ENCODE measurements at regions of chr6 and their contacts with region 1.

Region 1: GRCh38 chr6:32971581-32972352 is 3.4 kb downstream of the BRD2 start:
- DNase-seq: peak; percentile 100
- H3K4me3 Mint-ChIP-seq: peak overlapping the region; percentile 90
- H3K27ac Mint-ChIP-seq: peak overlapping the region; percentile 99
- H3K4me1 Mint-ChIP-seq: peaks cover 38% of the 10 kb centered on the region
- H3K27me3 Mint-ChIP-seq: no peaks in the 10 kb centered on the region
- CTCF ChIP-seq: no peak

Region 2: GRCh38 chr6:32195652-32195901 is 776.2 kb before region 1 on chr6:
- CTCF ChIA-PET with region 1: no interaction called
- POLR2A ChIA-PET with region 1: interaction called, 16 read pairs
- intact Hi-C with region 1: no loop called
- DNase-seq: peak; percentile 99
- H3K4me3 Mint-ChIP-seq: peak overlapping the region; percentile 93
- H3K27ac Mint-ChIP-seq: peak overlapping the region; percentile 98
- H3K4me1 Mint-ChIP-seq: peaks cover 12% of the 10 kb centered on the region
- H3K27me3 Mint-ChIP-seq: no peaks in the 10 kb centered on the region
- CTCF ChIP-seq: no peak

Region 3: GRCh38 chr6:32614366-32615081 is 357.2 kb before region 1 on chr6:
- CTCF ChIA-PET with region 1: no interaction called
- POLR2A ChIA-PET with region 1: no interaction called
- intact Hi-C with region 1: no loop called
- DNase-seq: no peak
- H3K4me3 Mint-ChIP-seq: no peak overlapping the region
- H3K27ac Mint-ChIP-seq: no peak overlapping the region
- H3K4me1 Mint-ChIP-seq: no peaks in the 10 kb centered on the region
- H3K27me3 Mint-ChIP-seq: peaks cover 52% of the 10 kb centered on the region
- CTCF ChIP-seq: no peak

Region 4: GRCh38 chr6:32853541-32854375 is 118.0 kb before region 1 on chr6 and contains the starts of genes PSMB9 and TAP1:
- CTCF ChIA-PET with region 1: interaction called, 6 read pairs
- POLR2A ChIA-PET with region 1: interaction called, 23 read pairs
- intact Hi-C with region 1: no loop called
- DNase-seq: peak; percentile 94
- H3K4me3 Mint-ChIP-seq: peak within 1 kb of the TSS; percentile 99
- H3K27ac Mint-ChIP-seq: peak within 1 kb of the TSS; percentile 94
- H3K4me1 Mint-ChIP-seq: peaks cover 21% of the 10 kb centered on the region
- H3K27me3 Mint-ChIP-seq: no peaks in the 10 kb centered on the region
- CTCF ChIP-seq: peak; percentile 51
- total RNA-seq, gene PSMB9: 3.5 and 4.4 TPM in 2 replicates
- total RNA-seq, gene TAP1: 32.3 and 35.2 TPM in 2 replicates

Region 5: DNA sequence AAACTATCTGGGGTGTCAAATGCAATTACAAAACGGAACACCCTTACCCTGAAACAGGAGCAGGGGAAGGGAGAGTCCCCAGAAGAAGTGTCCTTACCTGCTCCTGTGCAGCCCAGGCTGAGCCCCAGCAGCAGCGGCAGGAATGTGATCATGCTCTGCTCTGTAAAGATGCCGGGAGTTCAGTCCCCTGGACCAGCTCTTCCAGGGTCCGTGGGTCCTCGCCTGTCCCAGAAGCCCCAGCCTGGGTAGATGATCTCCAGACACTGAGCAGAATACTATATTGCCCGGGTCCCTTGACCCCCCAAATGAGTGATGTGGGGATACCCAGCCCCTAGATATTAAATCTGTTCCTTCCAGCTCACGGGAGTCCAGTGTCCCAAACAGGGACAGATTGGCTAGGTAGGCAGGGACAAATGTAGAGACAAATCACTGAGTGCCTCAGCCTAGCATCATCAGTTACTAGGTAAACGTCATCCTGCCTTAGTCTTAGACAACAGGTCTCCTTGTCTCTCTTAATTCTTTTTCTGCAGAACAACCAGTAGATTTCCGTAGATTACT is 31.0 kb before region 1 on chr6 and contains the start of gene HLA-DMB:
- CTCF ChIA-PET with region 1: interaction called, 4 read pairs
- POLR2A ChIA-PET with region 1: interaction called, 21 read pairs
- intact Hi-C with region 1: no loop called
- DNase-seq: peak; percentile 75
- H3K4me3 Mint-ChIP-seq: no peak within 1 kb of the TSS
- H3K27ac Mint-ChIP-seq: no peak within 1 kb of the TSS
- H3K4me1 Mint-ChIP-seq: peaks cover 5% of the 10 kb centered on the region
- H3K27me3 Mint-ChIP-seq: peaks cover 74% of the 10 kb centered on the region
- CTCF ChIP-seq: no peak
- total RNA-seq, gene HLA-DMB: not detected in 2 replicates

Region 6: DNA sequence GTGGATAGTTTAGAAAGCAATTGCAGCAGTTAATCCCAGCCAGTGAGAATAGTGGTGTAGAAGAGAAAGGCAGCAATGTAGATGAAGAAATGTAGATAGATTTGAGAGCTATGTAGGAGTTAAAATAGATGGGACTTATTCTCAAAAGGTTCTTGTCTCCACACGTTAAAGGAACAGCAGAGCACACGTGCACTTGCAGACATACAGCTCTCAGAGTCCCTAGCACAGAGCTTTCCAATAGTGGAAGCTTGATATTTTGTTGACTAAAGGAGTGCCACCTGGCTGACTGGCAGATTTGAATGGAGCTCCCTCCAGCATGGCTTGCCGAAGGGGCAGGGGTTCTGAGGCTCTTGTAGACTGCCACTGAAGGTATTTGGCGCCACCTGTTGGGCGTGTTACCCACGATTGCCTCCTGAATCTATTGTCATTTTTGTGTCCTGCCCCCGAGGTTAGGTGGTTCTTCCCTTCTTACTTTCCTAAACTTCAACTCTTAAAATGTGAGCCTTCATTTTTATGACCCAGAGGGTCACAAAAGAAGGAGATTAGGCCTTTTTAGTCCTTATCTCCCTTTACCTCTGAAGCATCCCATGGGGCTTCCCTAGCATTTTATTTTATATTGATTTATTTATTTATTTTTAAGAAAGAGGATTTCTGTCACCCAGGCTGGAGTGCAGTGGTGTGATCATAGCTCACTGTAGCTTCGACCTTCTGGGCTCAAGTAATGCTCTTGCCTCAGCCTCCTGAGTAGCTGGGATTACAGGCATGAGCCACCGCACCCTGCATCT is 13.0 kb after region 1 on chr6:
- CTCF ChIA-PET with region 1: interaction called, 59 read pairs
- POLR2A ChIA-PET with region 1: interaction called, 245 read pairs
- intact Hi-C with region 1: loop called (anchors 1 kb)
- DNase-seq: peak; percentile 91
- H3K4me3 Mint-ChIP-seq: no peak overlapping the region
- H3K27ac Mint-ChIP-seq: no peak overlapping the region
- H3K4me1 Mint-ChIP-seq: peaks cover 20% of the 10 kb centered on the region
- H3K27me3 Mint-ChIP-seq: no peaks in the 10 kb centered on the region
- CTCF ChIP-seq: peak; percentile 81

Region 7: GRCh38 chr6:33276864-33277662 is 305.3 kb after region 1 on chr6 and contains the start of gene B3GALT4:
- CTCF ChIA-PET with region 1: no interaction called
- POLR2A ChIA-PET with region 1: interaction called, 67 read pairs
- intact Hi-C with region 1: no loop called
- DNase-seq: peak; percentile 72
- H3K4me3 Mint-ChIP-seq: peak within 1 kb of the TSS; percentile 99
- H3K27ac Mint-ChIP-seq: peak within 1 kb of the TSS; percentile 80
- H3K4me1 Mint-ChIP-seq: peaks cover 30% of the 10 kb centered on the region
- H3K27me3 Mint-ChIP-seq: no peaks in the 10 kb centered on the region
- CTCF ChIP-seq: peak; percentile 52
- total RNA-seq, gene B3GALT4: 0.37 and 0.58 TPM in 2 replicates

Region 8: DNA sequence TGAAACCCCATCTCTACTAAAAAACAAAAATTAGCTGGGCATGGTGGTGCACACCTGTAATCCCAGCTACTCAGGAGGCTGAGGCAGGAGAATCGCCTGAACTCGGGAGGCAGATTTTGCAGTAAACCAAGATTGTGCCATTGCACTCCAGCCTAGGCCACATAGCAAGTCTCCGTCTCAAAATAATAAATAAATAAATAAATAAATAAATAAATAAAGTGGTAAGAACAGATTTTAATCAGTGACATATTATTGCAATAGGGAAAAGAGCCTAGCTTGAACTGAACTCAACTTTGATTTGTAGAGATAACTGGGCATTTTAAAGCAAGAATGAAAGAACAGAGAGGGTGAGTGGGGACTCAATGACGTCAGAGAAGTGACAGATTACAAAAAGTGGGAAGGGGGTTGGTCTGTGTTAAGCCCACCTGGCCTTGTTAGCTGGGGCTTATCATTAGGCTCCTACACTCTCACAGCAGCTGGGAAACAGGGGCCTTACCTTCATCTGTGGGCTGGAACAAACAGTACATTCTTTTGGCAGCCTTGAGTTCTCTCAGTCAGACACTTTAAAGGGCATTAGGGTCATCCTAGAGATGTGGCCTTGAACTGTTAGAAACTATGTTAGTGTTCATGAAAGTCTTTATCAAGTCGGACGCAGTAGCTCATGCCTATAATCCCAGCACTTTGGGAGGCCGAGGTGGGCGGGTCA is 395.4 kb after region 1 on chr6:
- CTCF ChIA-PET with region 1: no interaction called
- POLR2A ChIA-PET with region 1: no interaction called
- intact Hi-C with region 1: no loop called
- DNase-seq: no peak
- H3K4me3 Mint-ChIP-seq: no peak overlapping the region
- H3K27ac Mint-ChIP-seq: no peak overlapping the region
- H3K4me1 Mint-ChIP-seq: peaks cover 5% of the 10 kb centered on the region
- H3K27me3 Mint-ChIP-seq: no peaks in the 10 kb centered on the region
- CTCF ChIP-seq: no peak